Sciatic nerve (tissue), 2 donors: ENCODE measurements at regions of chr5 and their contacts with region 1.

Region 1: GRCh38 chr5:79619854-79620650 is 7.8 kb downstream of the TENT2 start:
- DNase-seq: no peak
- ATAC-seq: no peak

Region 2: GRCh38 chr5:78078858-78079257 is 1541.2 kb before region 1 on chr5:
- intact Hi-C with region 1: no loop called
- DNase-seq: no peak
- ATAC-seq: no peak

Region 3: DNA sequence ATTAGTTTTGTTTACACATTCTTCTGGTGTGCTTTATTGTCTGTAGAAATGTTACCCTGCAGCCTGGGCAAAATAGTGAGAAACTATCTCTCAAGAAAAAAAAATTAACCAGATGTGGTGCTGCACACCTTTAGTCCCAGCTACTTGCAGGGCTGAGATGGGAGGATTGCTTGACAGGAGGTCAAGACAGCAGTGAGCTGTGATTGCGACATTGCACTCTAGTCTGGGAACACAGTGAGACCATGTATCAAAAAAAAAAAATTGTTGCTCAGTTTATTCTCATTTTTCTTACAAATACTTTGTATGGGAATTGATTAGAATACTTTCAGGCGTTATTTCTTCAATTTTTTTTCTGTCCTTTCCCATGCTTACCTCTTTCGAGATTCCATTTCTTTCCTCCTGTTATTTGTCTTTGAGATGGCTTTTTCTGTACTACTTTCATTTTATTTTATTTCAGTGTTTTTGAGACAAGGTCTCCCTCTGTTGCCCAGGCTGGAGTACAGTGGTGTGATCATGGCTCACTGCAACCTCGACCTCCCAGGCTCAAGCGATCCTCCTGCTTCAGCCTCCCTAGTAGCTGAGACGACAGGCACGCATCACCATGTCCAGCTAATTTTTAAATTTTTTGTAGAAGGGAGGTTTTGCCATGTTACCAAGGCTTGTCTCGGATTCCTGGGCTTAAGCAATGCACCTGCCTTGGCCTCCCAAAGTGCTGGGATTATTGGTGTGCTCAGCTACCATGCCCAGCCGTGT is 17.1 kb after region 1 on chr5:
- intact Hi-C with region 1: loop called (anchors 1 kb)
- DNase-seq: no peak
- ATAC-seq: no peak